Right lobe of liver (tissue), 6 donors: ENCODE measurements at regions of chr3 and their contacts with region 1.

Region 1: DNA sequence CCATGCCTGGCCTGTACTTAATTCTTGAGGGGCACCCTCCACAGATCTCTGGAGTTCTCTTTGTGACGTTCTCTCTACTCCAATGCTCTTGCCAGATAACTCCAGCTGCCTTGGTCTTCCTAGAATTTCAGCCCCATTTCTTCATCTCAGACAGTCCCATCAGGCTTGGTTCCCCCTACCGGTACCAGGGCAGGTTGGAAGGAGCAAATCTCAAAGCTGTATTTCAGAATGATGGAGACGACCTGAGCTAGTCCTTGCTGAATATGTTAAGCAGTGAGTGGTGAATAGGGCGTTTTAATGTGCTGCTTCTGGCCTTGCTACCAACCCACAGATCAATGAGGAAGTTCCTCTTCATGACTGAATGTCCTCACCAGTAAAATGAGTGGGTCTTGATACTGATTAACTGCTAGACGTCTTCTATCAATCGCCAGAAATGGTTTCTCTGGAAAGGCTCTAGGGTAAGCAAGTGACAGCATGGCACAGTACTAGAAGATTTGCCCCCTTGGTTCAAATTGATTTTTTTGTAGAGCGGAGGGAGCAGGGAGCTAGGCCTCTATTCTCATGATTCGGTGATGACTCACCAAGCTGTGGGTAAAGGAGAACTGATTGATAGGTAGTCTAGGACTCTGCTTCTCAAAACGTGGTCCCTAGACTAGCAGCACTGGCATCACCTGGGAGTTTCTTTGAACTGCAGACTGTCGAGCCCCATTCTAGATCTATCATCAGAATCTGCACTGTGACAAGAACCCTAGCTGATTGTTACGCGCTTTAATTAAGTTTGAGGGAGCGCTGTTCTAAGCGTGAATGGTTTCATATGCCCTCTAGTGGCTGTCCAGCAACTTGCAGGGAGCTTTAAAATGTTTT is 67.8 kb downstream of the UBP1 start:
- DNase-seq: no peak
- ATAC-seq: peak; percentile 85 to 95 (median 90)
- H3K4me3 ChIP-seq: no peak overlapping the region
- H3K27ac ChIP-seq: no peak overlapping the region
- H3K4me1 ChIP-seq: peaks cover 0 to 6% (median 0%) of the 10 kb centered on the region in 4 donors
- H3K27me3 ChIP-seq: no peaks in the 10 kb centered on the region
- CTCF ChIP-seq: peak; percentile 86 to 94 (median 92)
- POLR2A ChIP-seq: no peak

Region 2: DNA sequence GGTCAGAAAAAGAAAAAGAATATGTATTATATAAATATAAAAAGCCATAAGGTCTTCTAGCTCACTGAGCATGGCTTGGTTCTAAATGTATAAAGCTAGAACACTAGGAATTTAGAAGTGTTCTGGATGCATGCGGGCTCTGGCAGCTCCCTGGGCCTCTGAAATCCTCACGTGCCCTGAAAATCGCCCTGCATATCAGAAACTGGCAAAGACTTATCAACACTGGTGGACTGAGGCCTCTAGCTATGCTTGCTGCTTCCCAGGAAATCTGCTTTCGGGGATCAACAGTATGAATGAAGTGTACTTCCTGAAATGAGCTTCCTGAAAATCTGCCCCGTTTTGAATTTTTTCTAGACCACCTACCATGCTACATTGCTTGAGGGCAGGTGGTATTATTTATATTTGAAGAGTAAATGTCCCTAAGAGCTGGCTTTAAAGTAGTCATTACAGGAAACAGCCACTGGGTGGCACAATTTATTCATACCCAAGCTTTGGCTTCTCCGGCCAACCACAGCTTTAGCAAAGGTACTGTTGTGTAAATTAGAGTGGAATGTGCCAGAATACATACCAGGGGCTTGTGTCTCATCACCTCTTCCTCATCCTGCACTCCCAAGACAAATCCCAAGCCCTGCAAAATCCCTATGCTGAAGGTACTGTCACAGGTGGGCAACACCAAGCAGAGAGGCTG is 241.0 kb before region 1 on chr3:
- intact Hi-C with region 1: loop called in 1 of 2 experiments (anchors 10 kb)
- DNase-seq: no peak
- ATAC-seq: peak; percentile 87 to 97 (median 92)
- H3K4me3 ChIP-seq: no peak overlapping the region
- H3K27ac ChIP-seq: no peak overlapping the region
- H3K4me1 ChIP-seq: no peaks in the 10 kb centered on the region
- H3K27me3 ChIP-seq: no peaks in the 10 kb centered on the region
- CTCF ChIP-seq: peak; percentile 72 to 78 (median 76)
- POLR2A ChIP-seq: no peak

Region 3: DNA sequence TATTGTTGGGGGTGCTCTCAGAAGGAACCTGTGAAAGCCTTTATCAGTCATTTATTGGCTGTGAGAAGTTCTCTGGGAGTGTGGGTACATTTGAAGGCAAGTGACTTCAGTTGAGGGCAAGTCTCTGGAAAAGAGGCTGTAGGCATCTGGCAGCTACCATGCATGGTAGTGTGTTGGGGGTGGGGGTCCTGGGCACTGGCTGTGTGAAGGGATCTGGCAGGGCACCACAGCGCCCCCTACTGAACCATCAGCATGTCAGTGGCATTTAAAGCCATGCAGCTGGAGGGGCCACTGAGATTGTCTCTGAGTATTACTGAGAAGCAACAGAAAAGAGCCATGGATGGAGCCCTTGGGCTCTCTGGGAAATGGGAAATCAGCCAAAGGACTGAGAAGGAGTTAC is 228.0 kb before region 1 on chr3:
- intact Hi-C with region 1: loop called (anchors 10 kb)
- DNase-seq: no peak
- ATAC-seq: no peak
- H3K4me3 ChIP-seq: no peak overlapping the region
- H3K27ac ChIP-seq: no peak overlapping the region
- H3K4me1 ChIP-seq: peaks cover 0 to 11% (median 0%) of the 10 kb centered on the region in 4 donors
- H3K27me3 ChIP-seq: no peaks in the 10 kb centered on the region
- CTCF ChIP-seq: peak in 2 of 4 donors; percentile 17 to 26
- POLR2A ChIP-seq: no peak